Panc1 (cell line): ENCODE measurements at regions of chr11 and their contacts with region 1.

Region 1: GRCh38 chr11:123188508-123189165 is 6.4 kb downstream of the CLMP start:
- DNase-seq: no peak
- ATAC-seq: peak; percentile 71
- H3K4me3 ChIP-seq: peak overlapping the region in 1 of 2 experiments; percentile 37; a peak in 2 of 4 replicates
- H3K27ac ChIP-seq: no peak overlapping the region
- H3K4me1 ChIP-seq: peaks cover 6% of the 10 kb centered on the region; the same call in 1 of the 2 replicates
- H3K27me3 ChIP-seq: peaks cover 12% of the 10 kb centered on the region
- CTCF ChIP-seq: no peak

Region 2: DNA sequence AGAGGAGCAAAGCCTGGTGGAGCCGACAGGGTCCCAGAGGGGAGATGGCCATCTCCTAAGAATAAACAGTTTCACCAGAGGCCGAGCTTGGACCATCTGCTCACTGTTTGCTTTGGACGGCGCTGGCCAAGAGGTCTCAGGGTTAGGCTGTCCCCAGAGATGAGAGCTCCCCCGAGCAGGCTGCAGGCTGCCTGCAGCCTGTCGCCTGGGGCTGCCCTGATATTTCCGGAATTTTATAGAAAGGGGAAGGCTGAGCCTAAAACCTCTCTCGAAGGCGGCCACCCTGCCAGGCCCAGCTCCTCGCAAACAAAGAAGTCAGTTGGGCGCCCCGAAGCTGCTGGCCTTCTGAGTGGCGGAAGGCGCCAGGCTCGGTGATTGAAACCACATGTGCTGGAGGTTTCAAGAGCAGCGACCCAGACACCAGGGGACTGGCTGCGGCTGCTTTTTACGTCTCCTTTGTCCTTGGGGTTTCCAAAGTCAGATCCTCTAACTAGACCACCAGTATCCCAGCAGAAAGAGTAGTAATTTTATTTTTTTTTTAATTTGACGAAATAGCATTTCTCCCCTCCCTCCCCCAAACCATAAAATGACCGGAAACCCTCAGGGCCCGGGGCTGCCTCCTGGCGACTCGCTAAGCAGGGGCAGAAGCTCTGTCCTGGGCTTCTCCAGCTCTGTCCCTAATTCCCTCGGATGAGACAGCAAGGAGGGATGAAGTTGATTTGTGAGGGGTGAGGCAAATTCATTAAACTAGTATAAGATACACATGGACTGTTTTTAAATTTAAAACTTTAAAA is 51.0 kb before region 1 on chr11:
- CTCF ChIA-PET with region 1: no interaction called
- POLR2A ChIA-PET with region 1: no interaction called
- in situ Hi-C with region 1: no loop called
- intact Hi-C with region 1: loop called (anchors 1 kb)
- DNase-seq: no peak
- ATAC-seq: no peak
- H3K4me3 ChIP-seq: no peak overlapping the region
- H3K27ac ChIP-seq: no peak overlapping the region
- H3K4me1 ChIP-seq: no peaks in the 10 kb centered on the region
- H3K27me3 ChIP-seq: no peaks in the 10 kb centered on the region
- CTCF ChIP-seq: no peak

Region 3: DNA sequence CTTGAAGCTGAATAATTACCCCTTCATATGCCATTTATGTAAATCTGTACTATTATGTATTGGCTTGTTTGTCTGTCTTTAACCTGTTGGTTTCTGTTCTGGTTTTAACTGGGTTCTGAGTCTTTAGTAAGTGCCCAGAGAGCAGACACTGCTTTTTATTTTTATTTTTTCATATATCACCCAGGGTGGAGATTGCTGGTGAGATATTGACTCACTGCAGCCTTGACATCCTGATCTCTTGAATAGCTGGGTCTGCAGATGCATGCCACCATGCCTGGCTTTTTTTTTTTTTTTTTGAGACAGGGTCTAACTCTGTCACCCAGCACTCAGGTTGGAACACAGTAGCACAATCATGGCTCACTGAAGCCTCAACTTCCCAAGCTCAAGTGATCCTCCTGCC is 260.8 kb after region 1 on chr11:
- CTCF ChIA-PET with region 1: no interaction called
- POLR2A ChIA-PET with region 1: interaction called, 15 read pairs
- in situ Hi-C with region 1: no loop called
- intact Hi-C with region 1: no loop called
- DNase-seq: no peak
- ATAC-seq: no peak
- H3K4me3 ChIP-seq: no peak overlapping the region
- H3K27ac ChIP-seq: no peak overlapping the region
- H3K4me1 ChIP-seq: no peaks in the 10 kb centered on the region
- H3K27me3 ChIP-seq: no peaks in the 10 kb centered on the region
- CTCF ChIP-seq: no peak